ENCODE measurements at regions of chr12 and their contacts with region 1.

Region 1: DNA sequence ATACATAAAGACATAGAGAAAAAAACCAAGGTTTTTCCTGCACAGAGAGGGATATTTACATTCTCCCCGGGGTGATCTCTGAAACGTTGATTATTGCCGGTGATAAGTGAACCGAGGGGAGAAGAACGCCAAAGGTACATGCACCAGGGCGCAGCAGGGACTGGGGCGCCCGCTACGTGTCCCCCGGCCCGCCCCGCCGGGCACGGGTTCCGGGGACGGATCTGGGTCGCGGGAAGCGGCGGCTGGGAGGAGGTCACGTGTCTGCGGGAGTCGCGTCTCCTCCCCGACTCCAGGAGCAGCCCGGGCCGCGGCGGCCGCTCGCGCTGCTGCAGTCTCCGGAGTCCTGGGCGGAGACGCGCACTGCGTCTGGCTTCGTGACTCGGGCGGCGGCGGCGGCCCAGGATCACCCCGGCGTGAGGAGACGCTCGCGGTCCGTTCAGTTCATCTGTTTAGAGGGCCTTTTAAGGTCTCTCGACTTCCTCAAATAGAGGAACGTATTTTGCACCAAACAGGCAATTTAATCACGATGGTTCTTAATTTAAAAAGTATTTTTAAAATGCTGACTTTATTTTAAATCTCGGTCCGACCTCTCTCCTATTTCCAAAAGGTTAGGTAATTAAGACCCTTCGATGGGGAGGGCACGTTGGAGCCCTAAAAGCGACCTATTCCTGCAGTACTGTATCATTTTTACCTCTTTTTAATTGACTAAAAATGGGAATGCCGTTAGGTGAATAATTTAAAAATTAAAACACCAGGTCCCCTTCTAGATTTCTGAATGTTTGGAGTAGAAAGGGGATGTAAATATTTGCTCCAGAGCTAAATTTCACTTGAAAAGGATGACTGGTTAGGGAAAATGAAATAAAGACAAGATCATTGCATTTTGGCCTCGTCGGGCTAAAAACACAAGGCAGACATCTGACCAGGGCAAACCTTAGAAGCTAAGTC is 1.8 kb upstream of the BHLHE41 start:
- DNase-seq: peak; percentile 88
- ATAC-seq: peak; percentile 42
- H3K4me3 ChIP-seq: peak overlapping the region; percentile 32 to 87 (median 74)
- H3K4me3 Mint-ChIP-seq: peak overlapping the region; percentile 99
- H3K27ac ChIP-seq: peak overlapping the region; percentile 67 to 87
- H3K27ac Mint-ChIP-seq: peak overlapping the region; percentile 98
- H3K4me1 ChIP-seq: peaks cover 48 to 49% of the 10 kb centered on the region in 2 donors
- H3K4me1 Mint-ChIP-seq: peaks cover 61% of the 10 kb centered on the region
- H3K27me3 ChIP-seq: peaks cover 0 to 14% (median 0%) of the 10 kb centered on the region in 4 experiments
- H3K27me3 Mint-ChIP-seq: peaks cover 4% of the 10 kb centered on the region
- CTCF ChIP-seq: peak; percentile 22

Region 2: GRCh38 chr12:26097046-26097878 is 29.4 kb before region 1 on chr12:
- CTCF ChIA-PET with region 1: interaction called, 20 read pairs
- POLR2A ChIA-PET with region 1: no interaction called
- intact Hi-C with region 1: no loop called
- DNase-seq: peak; percentile 81
- ATAC-seq: peak; percentile 93
- H3K4me3 ChIP-seq: no peak overlapping the region
- H3K4me3 Mint-ChIP-seq: no peak overlapping the region
- H3K27ac ChIP-seq: no peak overlapping the region
- H3K27ac Mint-ChIP-seq: no peak overlapping the region
- H3K4me1 ChIP-seq: no peaks in the 10 kb centered on the region
- H3K4me1 Mint-ChIP-seq: no peaks in the 10 kb centered on the region
- H3K27me3 ChIP-seq: no peaks in the 10 kb centered on the region
- H3K27me3 Mint-ChIP-seq: no peaks in the 10 kb centered on the region
- CTCF ChIP-seq: peak; percentile 100

Region 3: GRCh38 chr12:26153421-26154154 is 27.0 kb after region 1 on chr12:
- CTCF ChIA-PET with region 1: interaction called, 72 read pairs
- POLR2A ChIA-PET with region 1: interaction called, 117 read pairs
- intact Hi-C with region 1: loop called (anchors 1 kb)
- DNase-seq: no peak
- ATAC-seq: no peak
- H3K4me3 ChIP-seq: no peak overlapping the region
- H3K4me3 Mint-ChIP-seq: no peak overlapping the region
- H3K27ac ChIP-seq: peak overlapping the region; percentile 14 to 88
- H3K27ac Mint-ChIP-seq: peak overlapping the region; percentile 99
- H3K4me1 ChIP-seq: peaks cover 60 to 65% of the 10 kb centered on the region in 2 donors
- H3K4me1 Mint-ChIP-seq: peaks cover 82% of the 10 kb centered on the region
- H3K27me3 ChIP-seq: no peaks in the 10 kb centered on the region
- H3K27me3 Mint-ChIP-seq: no peaks in the 10 kb centered on the region
- CTCF ChIP-seq: no peak

Region 4: GRCh38 chr12:26195641-26196420 is 69.2 kb after region 1 on chr12:
- CTCF ChIA-PET with region 1: interaction called, 5 read pairs
- POLR2A ChIA-PET with region 1: interaction called, 19 read pairs
- intact Hi-C with region 1: loop called (anchors 2 kb)
- DNase-seq: peak; percentile 54
- ATAC-seq: peak; percentile 77
- H3K4me3 ChIP-seq: peak overlapping the region; percentile 44 to 74 (median 64)
- H3K4me3 Mint-ChIP-seq: peak overlapping the region; percentile 98
- H3K27ac ChIP-seq: peak overlapping the region in 1 of 2 donors; percentile 7
- H3K27ac Mint-ChIP-seq: peak overlapping the region; percentile 97
- H3K4me1 ChIP-seq: peaks cover 6 to 15% of the 10 kb centered on the region in 2 donors
- H3K4me1 Mint-ChIP-seq: peaks cover 16% of the 10 kb centered on the region
- H3K27me3 ChIP-seq: peaks cover 0 to 5% (median 0%) of the 10 kb centered on the region in 4 experiments
- H3K27me3 Mint-ChIP-seq: peaks cover 4% of the 10 kb centered on the region
- CTCF ChIP-seq: no peak

Region 5: DNA sequence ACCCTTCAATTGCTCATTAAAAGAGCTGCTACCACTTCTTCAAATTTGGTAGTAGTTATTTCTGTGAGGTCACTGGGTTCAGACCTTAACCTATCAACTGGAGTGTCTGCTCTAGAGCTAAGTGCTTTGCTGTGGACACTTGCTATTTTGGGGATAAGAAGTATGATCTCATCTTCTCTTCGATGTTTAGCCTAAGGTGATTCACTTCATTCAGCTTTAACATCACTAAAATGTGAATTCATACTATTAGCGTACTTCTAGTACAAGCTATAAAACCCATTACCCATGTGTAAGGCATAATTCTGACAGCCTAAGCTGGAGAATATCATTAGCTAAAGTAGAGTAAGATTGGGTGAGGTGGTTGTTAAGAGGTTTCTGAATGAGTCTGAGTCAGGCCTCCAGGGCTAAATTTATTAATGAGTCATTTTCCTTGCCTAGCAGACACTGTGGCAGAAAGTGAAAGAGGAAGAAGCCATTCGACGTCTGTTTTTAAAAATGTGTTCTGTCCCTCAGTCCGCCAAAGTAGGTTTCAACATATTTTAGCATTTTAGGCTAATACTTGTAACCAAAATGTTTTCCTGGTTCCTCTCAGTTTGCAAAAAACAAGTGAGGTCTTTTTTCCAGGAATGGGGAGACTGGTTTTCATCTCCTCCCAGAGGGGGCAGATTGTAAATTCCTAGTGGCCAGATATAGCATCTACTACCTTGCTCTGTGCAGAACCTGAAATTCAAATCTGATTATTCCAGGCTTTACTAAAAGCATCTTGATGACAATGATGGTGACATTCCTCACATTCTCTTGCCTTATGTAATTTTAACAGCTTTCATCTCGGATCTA is 172.4 kb after region 1 on chr12:
- CTCF ChIA-PET with region 1: interaction called, 5 read pairs
- POLR2A ChIA-PET with region 1: interaction called, 3 read pairs
- intact Hi-C with region 1: loop called (anchors 2 kb)
- DNase-seq: peak; percentile 75
- ATAC-seq: peak; percentile 96
- H3K4me3 ChIP-seq: peak overlapping the region in 4 of 5 experiments; percentile 30 to 42 (median 36)
- H3K4me3 Mint-ChIP-seq: peak overlapping the region; percentile 72
- H3K27ac ChIP-seq: peak overlapping the region; percentile 17 to 67
- H3K27ac Mint-ChIP-seq: peak overlapping the region; percentile 64
- H3K4me1 ChIP-seq: peaks cover 17 to 23% of the 10 kb centered on the region in 2 donors
- H3K4me1 Mint-ChIP-seq: peaks cover 26% of the 10 kb centered on the region
- H3K27me3 ChIP-seq: no peaks in the 10 kb centered on the region
- H3K27me3 Mint-ChIP-seq: no peaks in the 10 kb centered on the region
- CTCF ChIP-seq: no peak

Region 6: GRCh38 chr12:26434299-26435068 is 307.9 kb after region 1 on chr12:
- CTCF ChIA-PET with region 1: interaction called, 12 read pairs
- POLR2A ChIA-PET with region 1: no interaction called
- intact Hi-C with region 1: no loop called
- DNase-seq: peak; percentile 61
- ATAC-seq: peak; percentile 61
- H3K4me3 ChIP-seq: no peak overlapping the region
- H3K4me3 Mint-ChIP-seq: no peak overlapping the region
- H3K27ac ChIP-seq: no peak overlapping the region
- H3K27ac Mint-ChIP-seq: peak overlapping the region; percentile 11
- H3K4me1 ChIP-seq: no peaks in the 10 kb centered on the region
- H3K4me1 Mint-ChIP-seq: no peaks in the 10 kb centered on the region
- H3K27me3 ChIP-seq: no peaks in the 10 kb centered on the region
- H3K27me3 Mint-ChIP-seq: no peaks in the 10 kb centered on the region
- CTCF ChIP-seq: peak; percentile 83

Region 7: DNA sequence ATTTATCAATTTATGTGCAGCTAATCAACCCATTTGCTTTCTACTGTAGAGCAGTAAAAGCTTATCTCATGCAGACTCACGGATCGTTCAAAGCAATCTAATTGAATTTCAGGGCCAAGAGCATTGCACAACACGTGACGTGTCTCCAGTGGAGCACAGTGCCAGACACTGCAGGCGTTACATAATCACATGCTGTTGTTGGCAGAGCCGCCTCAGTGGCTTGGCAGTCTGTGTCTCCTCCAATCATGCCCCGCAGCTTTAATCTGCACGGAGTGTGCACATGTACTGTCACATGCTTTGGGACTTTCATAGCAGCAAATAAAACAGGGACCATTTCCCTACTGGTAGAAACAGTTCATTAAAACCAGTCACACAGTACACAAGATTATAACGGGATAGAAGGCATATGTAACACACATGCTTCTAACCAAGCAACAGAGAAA is 397.1 kb after region 1 on chr12:
- CTCF ChIA-PET with region 1: interaction called, 58 read pairs
- POLR2A ChIA-PET with region 1: no interaction called
- intact Hi-C with region 1: no loop called
- DNase-seq: no peak
- ATAC-seq: no peak
- H3K4me3 ChIP-seq: no peak overlapping the region
- H3K4me3 Mint-ChIP-seq: no peak overlapping the region
- H3K27ac ChIP-seq: no peak overlapping the region
- H3K27ac Mint-ChIP-seq: no peak overlapping the region
- H3K4me1 ChIP-seq: peaks cover 5 to 6% of the 10 kb centered on the region in 2 donors
- H3K4me1 Mint-ChIP-seq: peaks cover 10% of the 10 kb centered on the region
- H3K27me3 ChIP-seq: no peaks in the 10 kb centered on the region
- H3K27me3 Mint-ChIP-seq: no peaks in the 10 kb centered on the region
- CTCF ChIP-seq: no peak

Measured in B cell (primary cell).